Activated T-helper 2 cell treated with anti-CD3 and anti-CD28 coated beads, Interferon-gamma antibody, Interleukin-2, Interleukin-4, amounts not matched to agents 10 μg/mL and 5 μg/mL and 100 μg/mL, durations not matched to agents 14 hours and 24 hours and 36 hours (primary cell): ENCODE measurements at regions of chr10 and their contacts with region 1.

Region 1: GRCh38 chr10:15433850-15434537 is 62.9 kb upstream of the FAM171A1 start:
- DNase-seq: no peak
- H3K4me3 Mint-ChIP-seq: peak overlapping the region; percentile 79
- H3K27ac Mint-ChIP-seq: no peak overlapping the region
- H3K4me1 Mint-ChIP-seq: peaks cover 11% of the 10 kb centered on the region
- H3K27me3 Mint-ChIP-seq: peaks cover 15% of the 10 kb centered on the region

Region 2: GRCh38 chr10:15504101-15504840 is 70.3 kb after region 1 on chr10:
- intact Hi-C with region 1: loop called (anchors 5 kb)
- DNase-seq: peak; percentile 18
- H3K4me3 Mint-ChIP-seq: peak overlapping the region; percentile 28
- H3K27ac Mint-ChIP-seq: peak overlapping the region; percentile 88
- H3K4me1 Mint-ChIP-seq: peaks cover 34% of the 10 kb centered on the region
- H3K27me3 Mint-ChIP-seq: peaks cover 14% of the 10 kb centered on the region

Region 3: GRCh38 chr10:15585303-15585715 is 151.3 kb after region 1 on chr10:
- intact Hi-C with region 1: loop called (anchors 10 kb)
- DNase-seq: peak; percentile 13
- H3K4me3 Mint-ChIP-seq: no peak overlapping the region
- H3K27ac Mint-ChIP-seq: no peak overlapping the region
- H3K4me1 Mint-ChIP-seq: no peaks in the 10 kb centered on the region
- H3K27me3 Mint-ChIP-seq: peaks cover 12% of the 10 kb centered on the region

Region 4: DNA sequence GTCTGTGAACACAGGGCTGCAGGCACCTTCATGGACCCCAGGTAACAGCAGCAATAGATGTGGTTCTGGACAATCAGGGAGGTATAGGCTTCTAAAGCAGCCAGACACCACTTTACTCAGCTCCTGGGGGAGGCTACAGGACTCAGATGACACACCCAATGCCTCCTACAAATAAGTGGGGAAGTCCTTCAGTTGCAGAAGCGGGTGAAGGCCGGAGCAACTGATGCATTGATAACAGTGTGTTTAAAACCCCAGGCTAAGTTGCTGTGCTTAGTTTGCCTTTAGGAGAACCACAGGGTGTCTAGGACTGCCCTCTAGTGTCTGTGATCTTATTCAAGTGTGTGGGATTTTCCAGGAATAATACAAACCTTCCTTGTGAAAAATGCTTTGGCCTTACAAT is 291.6 kb after region 1 on chr10:
- intact Hi-C with region 1: loop called (anchors 1 kb)
- DNase-seq: no peak
- H3K4me3 Mint-ChIP-seq: no peak overlapping the region
- H3K27ac Mint-ChIP-seq: no peak overlapping the region
- H3K4me1 Mint-ChIP-seq: no peaks in the 10 kb centered on the region
- H3K27me3 Mint-ChIP-seq: peaks cover 19% of the 10 kb centered on the region

Region 5: DNA sequence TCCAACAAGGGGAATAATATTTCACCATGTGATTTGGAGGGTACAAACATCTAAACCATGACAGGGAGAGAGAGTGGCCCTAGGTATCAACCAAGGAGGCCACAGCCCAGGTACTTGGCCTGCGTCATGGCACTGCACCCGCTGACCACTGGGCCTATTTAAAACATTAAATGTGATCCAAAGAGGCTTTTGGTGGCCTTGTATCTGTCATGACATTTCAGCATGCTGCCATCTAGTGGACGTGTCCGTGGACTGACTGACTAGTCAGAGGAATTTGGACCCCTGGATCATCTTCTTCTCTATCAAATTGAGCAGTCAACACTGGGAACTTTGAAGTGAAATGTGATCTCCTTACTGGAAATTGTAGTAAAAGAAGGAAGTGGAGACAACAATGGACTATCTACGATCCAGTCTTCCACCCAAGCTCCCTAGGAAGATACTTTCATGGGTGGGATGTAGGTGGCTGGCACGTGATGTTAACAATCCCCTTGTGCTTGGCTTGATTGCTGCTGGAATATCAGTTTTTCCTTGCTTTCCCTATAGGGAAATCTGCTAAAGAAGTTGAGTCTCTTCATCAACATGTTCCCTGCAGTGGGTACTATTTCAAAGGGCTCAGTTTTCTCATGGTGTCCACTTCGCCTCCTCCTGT is 310.3 kb after region 1 on chr10:
- intact Hi-C with region 1: loop called (anchors 5 kb)
- DNase-seq: peak; percentile 14
- H3K4me3 Mint-ChIP-seq: no peak overlapping the region
- H3K27ac Mint-ChIP-seq: no peak overlapping the region
- H3K4me1 Mint-ChIP-seq: no peaks in the 10 kb centered on the region
- H3K27me3 Mint-ChIP-seq: peaks cover 10% of the 10 kb centered on the region

Region 6: GRCh38 chr10:15824498-15824897 is 390.5 kb after region 1 on chr10:
- intact Hi-C with region 1: loop called (anchors 10 kb)
- DNase-seq: no peak
- H3K4me3 Mint-ChIP-seq: no peak overlapping the region
- H3K27ac Mint-ChIP-seq: no peak overlapping the region
- H3K4me1 Mint-ChIP-seq: no peaks in the 10 kb centered on the region
- H3K27me3 Mint-ChIP-seq: no peaks in the 10 kb centered on the region